ENCODE measurements at regions of chr16 and their contacts with region 1.

Region 1: GRCh38 chr16:67816240-67817031 is 9.7 kb downstream of the TSNAXIP1 start:
- DNase-seq: peak; percentile 86 to 94 (median 93)
- ATAC-seq: peak; percentile 97
- H3K4me3 ChIP-seq: no peak overlapping the region
- H3K27ac ChIP-seq: no peak overlapping the region
- H3K4me1 ChIP-seq: peaks cover 5 to 9% of the 10 kb centered on the region in 2 experiments; a peak in 3 of 5 replicates
- H3K27me3 ChIP-seq: no peaks in the 10 kb centered on the region
- CTCF ChIP-seq: peak; percentile 99 to 100 (median 100)
- EP300 ChIP-seq: peak; percentile 23; the same call in 1 of the 2 replicates
- POLR2A ChIP-seq: no peak
- RAD21 ChIP-seq: peak; percentile 94 to 96

Region 2: GRCh38 chr16:67749436-67750078 is 66.9 kb before region 1 on chr16:
- CTCF ChIA-PET with region 1: no interaction called
- POLR2A ChIA-PET with region 1: no interaction called
- in situ Hi-C with region 1: no loop called
- intact Hi-C with region 1: no loop called
- DNase-seq: no peak
- ATAC-seq: no peak
- H3K4me3 ChIP-seq: no peak overlapping the region
- H3K27ac ChIP-seq: no peak overlapping the region
- H3K4me1 ChIP-seq: no peaks in the 10 kb centered on the region
- H3K27me3 ChIP-seq: no peaks in the 10 kb centered on the region
- CTCF ChIP-seq: no peak
- EP300 ChIP-seq: no peak
- POLR2A ChIP-seq: no peak
- RAD21 ChIP-seq: no peak

Region 3: GRCh38 chr16:67865316-67865715 is 48.9 kb after region 1 on chr16:
- CTCF ChIA-PET with region 1: interaction called, 13 read pairs
- POLR2A ChIA-PET with region 1: interaction called, 3 read pairs
- in situ Hi-C with region 1: no loop called
- intact Hi-C with region 1: loop called (anchors 1 kb)
- DNase-seq: peak in 2 of 4 experiments; percentile 33 to 42
- ATAC-seq: peak; percentile 75
- H3K4me3 ChIP-seq: no peak overlapping the region
- H3K27ac ChIP-seq: no peak overlapping the region
- H3K4me1 ChIP-seq: peaks cover 10% of the 10 kb centered on the region in 2 experiments; a peak in 4 of 5 replicates
- H3K27me3 ChIP-seq: no peaks in the 10 kb centered on the region
- CTCF ChIP-seq: peak; percentile 54 to 67 (median 66)
- EP300 ChIP-seq: no peak
- POLR2A ChIP-seq: no peak
- RAD21 ChIP-seq: peak; percentile 38 to 64; a peak in 3 of 4 replicates

Region 4: GRCh38 chr16:68085259-68086071 is 269.0 kb after region 1 on chr16 and contains the start of gene NFATC3:
- CTCF ChIA-PET with region 1: no interaction called
- POLR2A ChIA-PET with region 1: no interaction called
- in situ Hi-C with region 1: no loop called
- intact Hi-C with region 1: no loop called
- DNase-seq: peak; percentile 93 to 99 (median 95)
- ATAC-seq: peak; percentile 70
- H3K4me3 ChIP-seq: peak within 1 kb of the TSS; percentile 72
- H3K27ac ChIP-seq: peak within 1 kb of the TSS; percentile 97
- H3K4me1 ChIP-seq: peaks cover 36 to 38% of the 10 kb centered on the region in 2 experiments
- H3K27me3 ChIP-seq: no peaks in the 10 kb centered on the region
- CTCF ChIP-seq: 0 out of 6 replicates have a peak, but pooled peaks of 1 of the 3 experiments have one; percentile 13
- EP300 ChIP-seq: no peak
- POLR2A ChIP-seq: peak; percentile 12
- RAD21 ChIP-seq: no peak
- polyA plus RNA-seq, gene NFATC3: 15.7 to 19.1 TPM

Measured in K562 (cell line).